ENCODE measurements at regions of chr9 and their contacts with region 1.

Region 1: GRCh38 chr9:126611592-126612325 is 2.0 kb upstream of the LMX1B start:
- DNase-seq: peak; percentile 82 to 94 (median 93)
- ATAC-seq: peak; percentile 71 to 80
- H3K4me3 ChIP-seq: no peak overlapping the region
- H3K27ac ChIP-seq: no peak overlapping the region
- H3K4me1 ChIP-seq: no peaks in the 10 kb centered on the region
- H3K27me3 ChIP-seq: no peaks in the 10 kb centered on the region

Region 2: DNA sequence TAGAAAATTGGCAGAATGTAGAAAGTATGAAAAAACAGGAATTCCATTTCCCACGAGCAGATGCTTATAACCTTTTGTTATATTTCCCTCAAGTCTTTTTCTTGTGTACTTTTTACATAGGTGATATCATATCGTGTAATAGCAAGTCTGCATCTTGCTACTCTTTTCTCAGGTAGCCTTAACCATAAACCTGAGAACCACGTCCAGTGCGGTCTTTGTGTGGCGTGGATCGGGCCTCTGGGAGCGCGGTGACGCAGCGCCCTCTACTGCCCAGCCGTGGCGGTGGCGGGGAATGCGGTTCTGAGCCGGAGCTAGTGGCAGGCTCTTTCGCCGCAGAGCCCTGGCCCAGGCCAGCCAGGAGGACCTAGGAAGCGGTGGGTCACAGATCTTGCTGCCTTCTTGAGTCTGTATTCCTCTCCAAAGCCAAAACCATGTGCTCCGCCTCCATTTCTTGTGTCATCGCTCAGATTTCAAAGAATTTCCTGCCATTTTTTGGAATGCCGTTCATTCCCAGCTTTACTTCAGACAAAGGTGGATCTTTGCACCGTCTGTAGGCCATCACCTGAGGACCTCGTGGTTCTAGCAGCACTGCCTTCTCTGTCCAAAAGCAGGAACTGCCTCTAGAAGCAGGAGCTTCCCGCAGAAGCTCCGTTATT is 213.2 kb before region 1 on chr9:
- intact Hi-C with region 1: no loop called
- DNase-seq: peak; percentile 74 to 93 (median 91)
- ATAC-seq: peak; percentile 89 to 91
- H3K4me3 ChIP-seq: no peak overlapping the region
- H3K27ac ChIP-seq: no peak overlapping the region
- H3K4me1 ChIP-seq: no peaks in the 10 kb centered on the region
- H3K27me3 ChIP-seq: no peaks in the 10 kb centered on the region

Region 3: GRCh38 chr9:126564711-126565110 is 47.0 kb before region 1 on chr9:
- intact Hi-C with region 1: no loop called
- DNase-seq: no peak
- ATAC-seq: no peak
- H3K4me3 ChIP-seq: no peak overlapping the region
- H3K27ac ChIP-seq: no peak overlapping the region
- H3K4me1 ChIP-seq: no peaks in the 10 kb centered on the region
- H3K27me3 ChIP-seq: no peaks in the 10 kb centered on the region

Region 4: DNA sequence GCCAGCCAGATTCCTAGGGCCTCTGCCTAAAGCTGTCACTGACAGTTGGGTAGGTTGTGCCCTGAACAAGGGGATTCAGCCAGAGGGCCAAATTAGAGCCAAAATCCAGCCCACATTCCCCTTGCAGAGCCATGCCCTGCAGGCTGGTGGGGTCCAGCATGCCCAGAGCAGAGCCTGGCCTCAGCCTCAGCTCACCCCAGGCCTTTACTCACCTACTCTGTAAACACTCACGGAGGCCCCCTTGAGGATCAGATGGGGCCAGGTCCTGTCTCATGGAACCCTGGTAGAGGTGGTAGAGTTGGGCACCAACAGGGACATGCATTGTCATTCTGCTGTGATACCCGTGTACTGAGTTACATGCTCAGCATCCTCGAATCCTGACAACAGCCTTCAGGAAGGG is 76.9 kb after region 1 on chr9:
- intact Hi-C with region 1: loop called in 3 of 4 experiments (anchors 5 to 10 kb)
- DNase-seq: no peak
- ATAC-seq: no peak
- H3K4me3 ChIP-seq: no peak overlapping the region
- H3K27ac ChIP-seq: no peak overlapping the region
- H3K4me1 ChIP-seq: no peaks in the 10 kb centered on the region
- H3K27me3 ChIP-seq: no peaks in the 10 kb centered on the region

Region 5: GRCh38 chr9:126704873-126705766 is 93.4 kb after region 1 on chr9:
- intact Hi-C with region 1: loop called in 1 of 4 experiments (anchors 10 kb)
- DNase-seq: peak; percentile 77 to 92 (median 92)
- ATAC-seq: peak; percentile 57 to 74
- H3K4me3 ChIP-seq: no peak overlapping the region
- H3K27ac ChIP-seq: no peak overlapping the region
- H3K4me1 ChIP-seq: no peaks in the 10 kb centered on the region
- H3K27me3 ChIP-seq: no peaks in the 10 kb centered on the region